ENCODE measurements at regions of chr2 and their contacts with region 1.

Region 1: DNA sequence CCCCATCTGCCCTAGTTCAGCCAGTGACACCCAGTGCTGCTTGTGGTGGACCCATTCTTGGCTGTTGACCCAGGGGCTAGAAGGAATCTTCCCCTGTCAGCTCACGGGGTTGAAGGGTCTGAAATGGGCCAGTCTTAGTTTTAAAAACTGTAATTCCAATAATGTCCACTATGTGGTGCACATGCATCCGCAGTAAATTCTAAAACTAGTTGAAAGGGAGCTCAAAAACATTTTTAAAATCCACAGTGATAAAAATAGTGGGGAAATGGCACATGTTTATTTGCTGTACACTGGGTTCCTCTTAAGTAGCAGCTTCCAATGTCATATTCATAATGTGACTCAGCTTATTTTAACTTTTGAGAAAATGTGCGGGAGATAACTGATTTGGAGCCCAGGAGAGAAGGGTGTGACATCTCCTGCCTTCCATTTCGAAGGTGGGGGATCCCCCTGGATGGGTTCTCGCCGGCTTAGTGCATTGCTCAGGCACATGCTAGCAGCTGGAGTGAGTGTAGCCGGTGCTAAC is 32.8 kb downstream of the GRHL1 start:
- DNase-seq: peak; percentile 73
- H3K4me3 ChIP-seq: no peak overlapping the region
- H3K27ac ChIP-seq: no peak overlapping the region
- H3K4me1 ChIP-seq: peaks cover 5% of the 10 kb centered on the region
- H3K27me3 ChIP-seq: no peaks in the 10 kb centered on the region
- CTCF ChIP-seq: peak; percentile 46 to 60
- POLR2A ChIP-seq: no peak

Region 2: GRCh38 chr2:9770308-9771100 is 213.8 kb before region 1 on chr2:
- CTCF ChIA-PET with region 1: interaction called, 19 read pairs
- POLR2A ChIA-PET with region 1: no interaction called
- dilution Hi-C with region 1: no loop called
- intact Hi-C with region 1: no loop called
- DNase-seq: peak; percentile 51
- H3K4me3 ChIP-seq: no peak overlapping the region
- H3K27ac ChIP-seq: no peak overlapping the region
- H3K4me1 ChIP-seq: no peaks in the 10 kb centered on the region
- H3K27me3 ChIP-seq: no peaks in the 10 kb centered on the region
- CTCF ChIP-seq: peak; percentile 68 to 77
- POLR2A ChIP-seq: no peak

Region 3: DNA sequence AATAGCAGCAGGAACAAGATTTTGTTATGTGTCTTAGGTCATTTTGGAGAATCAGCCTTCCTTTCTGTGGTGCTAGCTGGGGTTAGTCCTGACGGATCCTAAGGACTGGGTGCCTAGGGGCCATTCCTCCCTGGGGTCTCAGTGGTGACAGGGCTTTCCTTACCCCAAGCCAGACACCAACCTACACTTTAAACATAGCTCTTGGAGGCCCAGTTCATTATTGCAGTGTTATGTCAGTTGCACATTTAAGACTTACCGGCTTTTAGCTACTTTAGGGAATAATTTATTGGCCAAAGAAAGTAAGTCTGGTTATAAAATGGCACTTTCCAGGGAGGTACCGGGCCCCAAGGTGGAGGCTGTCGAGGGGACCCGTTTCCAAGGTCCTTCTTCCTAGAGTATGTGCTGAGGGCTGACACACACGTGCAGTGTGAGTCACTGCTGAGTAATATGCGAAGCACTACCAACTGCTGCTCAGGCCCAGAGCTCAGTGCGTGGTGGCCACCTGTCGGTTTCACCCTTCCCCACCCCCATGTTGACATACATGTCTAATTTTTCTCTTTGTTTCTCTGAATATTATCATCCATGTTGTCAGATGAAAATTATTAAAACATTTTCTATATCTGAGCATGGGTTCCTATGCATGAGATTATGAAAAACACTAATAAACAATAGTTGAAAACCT is 69.8 kb before region 1 on chr2:
- CTCF ChIA-PET with region 1: interaction called, 12 read pairs
- POLR2A ChIA-PET with region 1: no interaction called
- dilution Hi-C with region 1: no loop called
- intact Hi-C with region 1: no loop called
- DNase-seq: peak; percentile 37
- H3K4me3 ChIP-seq: no peak overlapping the region
- H3K27ac ChIP-seq: peak overlapping the region; percentile 6
- H3K4me1 ChIP-seq: peaks cover 6% of the 10 kb centered on the region
- H3K27me3 ChIP-seq: no peaks in the 10 kb centered on the region
- CTCF ChIP-seq: no peak
- POLR2A ChIP-seq: no peak

Region 4: GRCh38 chr2:9951272-9951972 is 32.9 kb before region 1 on chr2 and contains the start of gene GRHL1:
- CTCF ChIA-PET with region 1: interaction called, 10 read pairs
- POLR2A ChIA-PET with region 1: no interaction called
- dilution Hi-C with region 1: no loop called
- intact Hi-C with region 1: no loop called
- DNase-seq: peak; percentile 92
- H3K4me3 ChIP-seq: peak within 1 kb of the TSS; percentile 58 to 67 (median 59)
- H3K27ac ChIP-seq: no peak within 1 kb of the TSS
- H3K4me1 ChIP-seq: peaks cover 4% of the 10 kb centered on the region
- H3K27me3 ChIP-seq: no peaks in the 10 kb centered on the region
- CTCF ChIP-seq: no peak
- POLR2A ChIP-seq: no peak
- total RNA-seq, gene GRHL1: 0.85 and 1.1 TPM in 2 replicates

Region 5: DNA sequence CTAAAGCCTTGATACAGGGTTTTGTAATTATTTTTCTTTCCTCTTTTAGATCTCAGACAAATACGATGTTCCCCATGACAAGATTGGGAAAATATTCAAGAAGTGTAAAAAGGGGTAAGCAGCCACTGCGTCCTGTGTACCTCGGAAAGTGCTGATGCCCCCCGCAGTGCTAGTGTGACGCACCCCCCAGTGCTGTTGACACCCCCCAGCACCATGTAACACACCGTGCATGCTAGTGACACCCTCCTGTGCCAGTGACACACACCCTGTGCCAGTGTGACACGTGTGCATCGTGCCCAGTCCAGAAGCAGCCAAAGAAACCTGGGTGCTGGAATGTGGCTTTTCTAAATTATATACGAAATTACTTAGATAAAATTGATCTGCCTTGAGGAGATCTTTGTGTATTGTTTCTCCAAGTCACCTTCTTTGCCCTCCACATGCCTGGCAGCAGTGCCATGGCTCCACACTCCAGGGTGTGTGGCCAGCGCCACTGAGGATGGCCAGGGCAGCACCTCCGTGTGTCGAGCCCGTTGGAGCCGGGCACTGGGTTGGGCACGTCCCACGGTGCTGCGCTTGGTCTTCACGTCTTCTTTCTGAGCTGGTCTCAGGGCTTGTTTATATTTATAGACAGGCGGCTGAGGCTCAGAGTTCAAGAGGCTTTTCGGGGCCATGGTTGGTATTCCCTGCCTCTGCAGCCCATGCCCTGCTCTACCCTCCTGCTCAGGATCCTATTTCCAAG is 14.8 kb after region 1 on chr2:
- CTCF ChIA-PET with region 1: interaction called, 50 read pairs
- POLR2A ChIA-PET with region 1: interaction called, 3 read pairs
- dilution Hi-C with region 1: no loop called
- intact Hi-C with region 1: no loop called
- DNase-seq: no peak
- H3K4me3 ChIP-seq: no peak overlapping the region
- H3K27ac ChIP-seq: no peak overlapping the region
- H3K4me1 ChIP-seq: peaks cover 9% of the 10 kb centered on the region
- H3K27me3 ChIP-seq: no peaks in the 10 kb centered on the region
- CTCF ChIP-seq: no peak
- POLR2A ChIP-seq: no peak

Region 6: DNA sequence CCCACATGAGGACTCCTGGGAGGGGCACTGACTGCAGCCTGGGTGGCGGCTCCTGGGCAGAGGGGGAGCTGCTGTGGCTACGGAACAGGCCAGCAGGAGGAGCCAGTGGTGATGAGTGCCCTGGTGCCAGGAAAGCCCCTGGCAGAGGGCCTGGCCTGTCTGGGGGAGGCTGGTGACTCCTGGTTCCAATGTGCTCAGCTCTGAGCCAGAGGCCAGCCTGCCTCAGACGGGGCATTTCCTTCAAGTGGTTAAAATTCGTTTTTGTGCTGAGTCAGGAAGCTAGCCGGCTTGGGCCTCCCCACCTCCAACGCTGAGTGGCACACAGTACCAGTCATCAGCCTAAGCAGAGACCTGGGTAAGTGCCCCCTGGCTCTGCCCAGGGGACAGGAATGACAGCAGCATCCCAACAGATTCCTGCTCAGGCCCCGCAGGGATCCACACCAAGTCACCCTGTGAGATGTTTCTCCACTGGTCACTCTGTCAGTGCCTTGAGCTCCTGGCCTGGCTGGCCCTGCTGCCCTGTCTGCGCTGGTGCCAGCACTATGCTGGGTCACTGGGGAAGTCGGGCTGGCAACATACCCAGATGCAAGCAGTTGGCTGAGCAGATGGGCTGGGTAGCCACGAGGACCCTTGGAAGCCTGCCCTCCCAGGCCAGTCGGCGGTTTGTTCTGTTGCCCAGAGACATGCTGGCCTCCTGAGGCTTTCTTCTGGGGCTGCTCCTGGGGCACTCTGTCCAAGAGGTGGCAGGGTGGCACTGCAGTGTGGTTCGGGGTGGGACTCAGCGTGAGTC is 52.0 kb after region 1 on chr2:
- CTCF ChIA-PET with region 1: interaction called, 340 read pairs
- POLR2A ChIA-PET with region 1: no interaction called
- dilution Hi-C with region 1: no loop called
- intact Hi-C with region 1: no loop called
- DNase-seq: peak; percentile 80
- H3K4me3 ChIP-seq: no peak overlapping the region
- H3K27ac ChIP-seq: peak overlapping the region; percentile 28
- H3K4me1 ChIP-seq: peaks cover 24% of the 10 kb centered on the region
- H3K27me3 ChIP-seq: no peaks in the 10 kb centered on the region
- CTCF ChIP-seq: peak; percentile 73 to 83
- POLR2A ChIP-seq: no peak

Region 7: DNA sequence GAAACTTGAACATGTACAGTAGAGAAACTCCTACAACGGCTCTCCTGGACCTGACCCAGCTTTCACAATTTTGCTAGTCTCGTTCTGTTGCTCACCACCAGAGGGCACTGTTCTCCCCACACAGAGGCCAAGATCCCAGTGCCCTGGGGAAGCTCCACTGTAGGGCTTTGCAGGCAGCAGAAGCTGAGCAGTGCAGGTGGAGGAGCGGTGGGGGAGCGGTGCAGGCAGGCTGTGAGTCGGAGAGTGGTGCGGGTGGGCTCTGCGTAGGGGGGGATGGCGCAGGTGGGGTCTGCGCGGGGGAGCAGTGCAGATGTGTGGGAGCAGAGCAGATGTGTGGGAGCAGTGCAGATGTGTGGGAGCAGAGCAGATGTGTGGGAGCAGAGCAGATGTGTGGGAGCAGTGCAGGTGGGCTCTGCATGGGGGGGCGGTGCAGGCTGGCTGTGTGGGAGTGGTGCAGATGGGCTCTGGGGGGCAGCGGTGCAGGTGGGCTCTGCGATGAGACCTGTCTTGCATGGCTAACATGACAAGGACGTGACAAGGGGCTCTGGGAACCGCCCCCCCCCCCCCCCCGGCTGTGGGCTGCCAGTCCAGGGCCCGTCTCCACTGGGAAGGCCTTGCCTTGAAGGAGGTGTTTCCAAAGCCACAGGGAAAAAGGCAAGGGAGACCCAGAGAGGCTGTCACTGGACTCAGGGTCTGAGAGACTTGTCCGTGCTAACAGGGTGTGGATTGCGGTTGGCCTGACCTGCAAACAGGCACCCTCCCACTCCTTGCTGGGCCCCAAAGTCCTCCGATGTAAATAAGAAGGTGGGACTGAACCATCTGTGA is 88.6 kb after region 1 on chr2:
- CTCF ChIA-PET with region 1: interaction called, 33 read pairs
- POLR2A ChIA-PET with region 1: no interaction called
- dilution Hi-C with region 1: no loop called
- intact Hi-C with region 1: no loop called
- DNase-seq: peak; percentile 76
- H3K4me3 ChIP-seq: no peak overlapping the region
- H3K27ac ChIP-seq: no peak overlapping the region
- H3K4me1 ChIP-seq: no peaks in the 10 kb centered on the region
- H3K27me3 ChIP-seq: peaks cover 11 to 14% of the 10 kb centered on the region in 2 experiments
- CTCF ChIP-seq: peak; percentile 87 to 90
- POLR2A ChIP-seq: no peak

Region 8: DNA sequence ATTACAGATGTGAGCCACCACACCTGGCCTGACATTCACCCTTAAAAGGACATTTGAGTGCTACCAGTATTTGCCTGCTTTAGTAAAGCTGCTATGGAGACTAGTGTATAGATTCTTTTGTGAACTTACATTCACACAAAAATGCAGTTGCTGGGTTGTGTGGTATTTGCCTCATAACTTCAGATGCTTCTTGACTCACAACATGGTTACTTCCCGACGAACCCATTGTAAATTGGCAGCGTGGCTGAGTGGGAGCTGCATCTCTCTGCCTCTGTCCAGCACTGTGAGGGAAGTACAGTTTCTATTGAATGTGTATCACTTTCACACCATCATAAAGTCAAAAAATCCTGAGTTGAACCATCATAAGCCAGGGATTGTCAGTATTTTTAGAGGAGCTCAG is 195.1 kb after region 1 on chr2:
- CTCF ChIA-PET with region 1: no interaction called
- POLR2A ChIA-PET with region 1: no interaction called
- dilution Hi-C with region 1: no loop called
- intact Hi-C with region 1: no loop called
- DNase-seq: no peak
- H3K4me3 ChIP-seq: no peak overlapping the region
- H3K27ac ChIP-seq: no peak overlapping the region
- H3K4me1 ChIP-seq: no peaks in the 10 kb centered on the region
- H3K27me3 ChIP-seq: no peaks in the 10 kb centered on the region
- CTCF ChIP-seq: no peak
- POLR2A ChIP-seq: no peak

Measured in endothelial cell of umbilical vein (primary cell).